Motor neuron (in vitro differentiated cells): ENCODE measurements at regions of chr18 and their contacts with region 1.

Region 1: DNA sequence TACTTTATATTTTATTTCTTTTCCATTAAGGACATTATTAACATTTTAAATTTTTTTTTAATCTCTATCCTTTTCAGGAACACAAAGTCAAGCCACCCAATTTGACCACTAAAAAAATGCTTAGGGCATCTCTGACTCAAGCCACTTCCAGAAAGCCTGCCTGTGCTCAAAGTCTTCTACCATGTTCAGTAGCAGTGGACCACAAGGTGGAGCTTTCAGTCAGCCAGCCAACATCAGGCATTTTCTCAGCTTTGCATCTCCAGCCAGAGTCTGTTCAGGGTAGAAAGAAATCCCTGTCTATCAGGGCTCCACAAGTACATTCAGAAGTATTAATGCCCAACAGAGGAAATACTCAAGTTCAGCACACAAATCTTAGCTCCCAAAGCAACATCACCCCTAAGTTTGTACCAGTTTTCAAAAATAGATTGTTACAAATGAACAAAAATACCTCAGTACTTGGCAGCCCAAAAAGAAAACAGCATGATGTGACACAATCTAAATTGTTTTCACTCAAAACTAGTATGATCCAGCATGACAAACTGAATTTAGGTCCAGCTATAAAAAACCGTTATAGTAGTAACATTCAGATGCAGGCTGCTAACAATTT is 37.6 kb downstream of the C18orf63 start:
- ATAC-seq: peak; percentile 83 to 96 (median 90)
- H3K4me3 ChIP-seq: no peak overlapping the region
- H3K27ac ChIP-seq: no peak overlapping the region
- H3K4me1 ChIP-seq: no peaks in the 10 kb centered on the region

Region 2: DNA sequence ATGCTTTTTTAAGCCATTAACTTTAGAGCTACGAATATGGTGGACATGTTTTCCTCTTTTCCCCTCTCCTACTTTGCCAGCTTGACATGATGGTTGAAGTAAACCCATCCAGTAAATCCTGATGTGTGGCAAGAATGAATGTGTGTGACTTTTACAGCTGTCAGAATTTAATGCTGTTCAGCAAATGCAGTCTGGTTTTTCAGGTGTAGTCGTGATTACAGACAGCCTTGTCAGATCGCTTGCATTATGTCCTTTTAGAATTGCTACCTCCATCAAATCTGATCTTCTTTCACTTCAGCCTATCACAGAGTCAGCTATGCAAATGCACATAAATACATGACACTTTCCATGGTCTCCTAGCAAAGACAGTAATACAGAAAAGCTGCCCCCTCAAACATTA is 484.1 kb before region 1 on chr18:
- in situ Hi-C with region 1: no loop called
- ATAC-seq: peak in 1 of 8 experiments; percentile 13
- H3K4me3 ChIP-seq: no peak overlapping the region
- H3K27ac ChIP-seq: no peak overlapping the region
- H3K4me1 ChIP-seq: peaks cover 0 to 2% of the 10 kb centered on the region in 2 donors

Region 3: DNA sequence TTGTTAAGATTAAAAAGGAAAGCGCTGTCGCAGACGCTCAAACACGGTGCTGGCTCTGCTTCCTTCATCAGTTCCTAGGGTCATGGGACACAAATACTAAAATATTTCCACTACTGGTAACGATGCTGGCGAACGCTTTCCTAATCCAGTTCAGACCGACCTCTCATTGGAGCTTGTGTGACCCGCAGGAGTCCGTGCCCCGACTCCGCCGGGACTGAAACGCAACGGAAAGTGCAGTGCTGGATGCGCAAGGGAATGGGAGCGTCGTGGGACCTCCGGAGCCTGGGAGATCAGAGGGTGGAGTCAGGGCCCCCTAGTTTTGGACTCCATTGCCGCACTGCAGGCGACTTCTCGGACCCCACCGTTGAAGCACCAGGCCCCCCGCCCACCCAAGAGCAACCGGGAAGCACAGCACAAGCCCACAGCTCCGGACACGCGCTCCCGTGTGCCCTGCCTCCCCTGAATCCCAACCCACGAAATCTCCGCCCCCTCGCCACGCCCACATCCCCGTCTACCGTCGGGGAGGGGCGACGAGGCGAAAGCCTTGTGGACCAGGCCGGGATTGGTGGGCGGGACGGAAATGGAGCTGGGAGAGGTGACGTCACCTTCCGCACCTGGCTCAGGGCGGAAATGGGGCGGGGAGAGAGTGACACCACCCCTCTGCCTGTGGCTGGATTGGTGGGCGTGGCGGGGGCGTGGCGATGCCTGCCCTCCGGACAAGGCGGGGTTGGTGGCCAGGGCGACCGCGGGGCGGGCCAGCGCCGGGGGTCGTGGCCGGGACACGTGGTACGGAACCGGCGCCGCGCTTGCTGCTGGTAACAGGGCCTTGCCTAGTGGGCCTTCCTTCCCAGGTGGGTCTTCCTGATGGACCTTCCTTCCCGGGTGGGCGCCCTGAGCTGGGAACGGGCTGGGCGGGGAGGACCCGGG is 142.6 kb after region 1 on chr18 and contains the start of gene CNDP2:
- in situ Hi-C with region 1: loop called in 4 of 9 experiments (anchors 10 to 25 kb)
- ATAC-seq: peak; percentile 73 to 88 (median 86)
- H3K4me3 ChIP-seq: peak within 1 kb of the TSS; percentile 64 to 81 (median 74)
- H3K27ac ChIP-seq: peak within 1 kb of the TSS; percentile 91 to 96
- H3K4me1 ChIP-seq: peaks cover 0 to 6% of the 10 kb centered on the region in 2 donors
- total RNA-seq, gene CNDP2: 42.5 to 222 (median 75.9) TPM

Region 4: GRCh38 chr18:74551936-74552555 is 198.8 kb after region 1 on chr18:
- in situ Hi-C with region 1: loop called in 3 of 9 experiments (anchors 10 kb)
- ATAC-seq: peak; percentile 91 to 100 (median 96)
- H3K4me3 ChIP-seq: no peak overlapping the region
- H3K27ac ChIP-seq: no peak overlapping the region
- H3K4me1 ChIP-seq: no peaks in the 10 kb centered on the region

Region 5: GRCh38 chr18:74679006-74679678 is 325.9 kb after region 1 on chr18:
- in situ Hi-C with region 1: no loop called
- ATAC-seq: no peak
- H3K4me3 ChIP-seq: no peak overlapping the region
- H3K27ac ChIP-seq: no peak overlapping the region
- H3K4me1 ChIP-seq: peaks cover 0 to 10% of the 10 kb centered on the region in 2 donors